ENCODE measurements at regions of chr6 and their contacts with region 1.

Region 1: DNA sequence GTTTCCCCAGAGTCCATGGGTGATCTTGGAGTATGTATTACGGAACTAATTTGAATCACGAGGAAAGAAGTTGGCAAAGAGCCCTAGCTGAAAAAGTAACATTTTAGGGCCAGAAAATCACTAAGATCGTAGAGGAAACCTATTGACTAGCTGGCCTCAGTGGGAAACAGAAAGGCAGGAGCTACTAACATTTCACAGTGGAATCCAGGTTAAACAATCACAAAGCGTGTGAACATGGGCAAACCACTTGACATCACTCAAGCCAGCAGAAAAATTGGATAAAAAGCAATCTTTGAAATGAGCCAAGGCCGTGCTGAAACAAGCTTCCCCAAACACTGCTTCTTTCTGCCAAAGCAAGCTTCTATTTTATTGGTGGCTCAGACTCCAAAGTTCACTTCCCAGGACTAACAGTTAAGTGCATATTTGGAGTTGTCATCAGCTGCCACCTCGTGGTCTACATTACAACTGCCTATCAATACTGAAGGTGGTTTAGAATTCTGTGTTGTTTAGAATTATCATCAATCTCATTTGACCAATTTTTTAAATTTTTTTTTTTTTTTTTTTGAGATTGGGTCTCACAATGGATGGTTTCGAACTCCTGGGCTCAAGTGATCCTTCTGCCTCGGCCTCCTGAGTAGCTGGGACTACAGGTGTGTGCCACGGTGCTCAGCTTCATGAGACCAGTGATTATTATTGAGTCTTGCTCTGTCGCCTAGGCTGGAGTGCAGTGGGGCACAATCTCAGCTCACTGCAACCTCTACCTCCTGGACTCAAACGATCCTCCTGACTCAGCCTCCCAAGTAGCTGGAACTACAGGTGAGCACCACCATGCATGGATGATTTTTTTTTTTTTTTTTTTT is 10.6 kb downstream of the RPS10 start:
- ATAC-seq: peak in 3 of 8 experiments; percentile 53 to 67 (median 63)
- H3K4me3 ChIP-seq: no peak overlapping the region
- H3K27ac ChIP-seq: no peak overlapping the region
- H3K4me1 ChIP-seq: peaks cover 9 to 10% of the 10 kb centered on the region in 2 donors

Region 2: GRCh38 chr6:34132486-34133185 is 282.6 kb before region 1 on chr6:
- in situ Hi-C with region 1: no loop called
- ATAC-seq: peak in 6 of 8 experiments; percentile 32 to 82 (median 54)
- H3K4me3 ChIP-seq: no peak overlapping the region
- H3K27ac ChIP-seq: no peak overlapping the region
- H3K4me1 ChIP-seq: peaks cover 2 to 24% of the 10 kb centered on the region in 2 donors

Region 3: GRCh38 chr6:34196126-34196830 is 219.0 kb before region 1 on chr6:
- in situ Hi-C with region 1: no loop called
- ATAC-seq: peak; percentile 94 to 99 (median 98)
- H3K4me3 ChIP-seq: peak overlapping the region in 2 of 5 donors; percentile 9 to 11
- H3K27ac ChIP-seq: no peak overlapping the region
- H3K4me1 ChIP-seq: no peaks in the 10 kb centered on the region

Region 4: GRCh38 chr6:34248727-34249551 is 166.3 kb before region 1 on chr6 and contains the start of gene SMIM29:
- in situ Hi-C with region 1: loop called in 2 of 9 experiments (anchors 25 kb)
- ATAC-seq: peak; percentile 76 to 89 (median 87)
- H3K4me3 ChIP-seq: peak within 1 kb of the TSS; percentile 61 to 81 (median 74)
- H3K27ac ChIP-seq: peak within 1 kb of the TSS; percentile 67 to 76
- H3K4me1 ChIP-seq: peaks cover 14 to 20% of the 10 kb centered on the region in 2 donors
- total RNA-seq, gene SMIM29: 8.1 to 62.9 (median 23.8) TPM

Region 5: DNA sequence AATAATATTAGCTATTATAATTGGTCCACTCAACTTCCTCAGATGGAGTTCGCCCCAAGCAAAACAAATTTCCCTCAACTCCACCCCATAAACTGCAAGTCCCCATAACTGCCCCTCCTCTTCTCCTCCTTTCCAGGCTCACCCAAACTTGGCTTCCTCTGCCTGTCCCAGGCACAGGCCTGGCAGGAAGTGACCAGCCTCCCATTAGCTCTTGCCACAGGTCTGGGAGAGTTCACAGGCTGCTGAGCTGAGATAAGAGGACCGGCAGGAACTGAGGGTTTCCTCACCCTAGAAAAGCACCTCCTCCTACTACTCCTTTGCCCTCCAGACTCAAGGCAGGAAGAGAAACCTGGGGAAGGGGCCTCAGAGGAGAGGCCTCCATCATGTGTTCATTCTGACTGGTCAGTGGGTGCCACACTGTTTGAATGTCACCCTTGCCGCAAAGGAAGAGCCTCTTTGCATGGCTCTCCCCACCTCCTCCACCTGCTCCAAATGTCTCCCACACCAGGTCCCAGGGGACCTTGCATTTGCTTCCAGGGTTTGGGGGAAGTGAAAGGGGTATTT is 141.9 kb before region 1 on chr6:
- in situ Hi-C with region 1: loop called in 1 of 9 experiments (anchors 25 kb)
- ATAC-seq: no peak
- H3K4me3 ChIP-seq: no peak overlapping the region
- H3K27ac ChIP-seq: no peak overlapping the region
- H3K4me1 ChIP-seq: no peaks in the 10 kb centered on the region